Posterior vena cava (tissue), 2 donors: ENCODE measurements at regions of chr13 and their contacts with region 1.

Region 1: DNA sequence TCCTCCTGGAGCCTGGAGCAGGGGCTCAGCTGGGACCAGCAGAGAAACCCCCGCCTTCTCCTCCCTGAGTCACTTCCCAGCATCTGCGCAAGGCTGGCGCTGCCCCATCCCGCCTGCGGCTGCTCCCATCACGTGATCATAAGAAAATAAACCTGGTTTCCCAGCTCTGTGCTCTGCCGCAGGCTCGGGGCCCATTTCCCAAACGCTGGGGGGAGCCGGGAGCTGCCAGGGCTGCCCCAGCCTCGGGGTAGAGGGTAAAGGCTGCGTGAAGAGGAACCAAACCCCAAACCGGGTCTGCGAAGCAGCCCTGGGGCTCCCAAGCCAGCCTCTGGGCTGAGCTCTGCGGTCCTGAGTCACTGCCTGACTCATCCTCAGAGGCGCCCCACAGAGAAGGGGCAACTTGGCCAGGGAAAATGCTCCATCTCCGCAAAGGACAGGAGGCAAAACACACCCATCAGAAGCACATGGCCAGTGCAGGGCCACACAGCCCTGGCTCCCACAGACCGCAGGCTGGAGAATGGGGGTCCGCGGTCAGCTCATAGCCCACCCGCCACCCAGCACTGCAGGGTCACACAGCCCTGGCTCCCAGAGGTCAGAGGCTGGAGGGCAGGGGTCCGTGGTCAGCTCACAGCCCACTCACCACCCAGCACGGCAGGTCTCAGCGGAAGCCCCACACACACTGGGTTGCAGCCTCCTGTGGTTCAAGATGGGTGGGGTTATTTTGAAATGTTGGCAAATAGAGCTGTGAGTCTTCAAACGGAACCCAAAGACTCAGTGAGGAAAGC is 67.1 kb downstream of the RASA3 start:
- DNase-seq: peak; percentile 96

Region 2: GRCh38 chr13:114035583-114036531 is 29.5 kb before region 1 on chr13:
- intact Hi-C with region 1: loop called in 1 of 2 experiments (anchors 2 kb)
- DNase-seq: no peak

Region 3: GRCh38 chr13:114099918-114100445 is 34.6 kb after region 1 on chr13:
- intact Hi-C with region 1: loop called in 1 of 2 experiments (anchors 5 kb)
- DNase-seq: no peak

Region 4: DNA sequence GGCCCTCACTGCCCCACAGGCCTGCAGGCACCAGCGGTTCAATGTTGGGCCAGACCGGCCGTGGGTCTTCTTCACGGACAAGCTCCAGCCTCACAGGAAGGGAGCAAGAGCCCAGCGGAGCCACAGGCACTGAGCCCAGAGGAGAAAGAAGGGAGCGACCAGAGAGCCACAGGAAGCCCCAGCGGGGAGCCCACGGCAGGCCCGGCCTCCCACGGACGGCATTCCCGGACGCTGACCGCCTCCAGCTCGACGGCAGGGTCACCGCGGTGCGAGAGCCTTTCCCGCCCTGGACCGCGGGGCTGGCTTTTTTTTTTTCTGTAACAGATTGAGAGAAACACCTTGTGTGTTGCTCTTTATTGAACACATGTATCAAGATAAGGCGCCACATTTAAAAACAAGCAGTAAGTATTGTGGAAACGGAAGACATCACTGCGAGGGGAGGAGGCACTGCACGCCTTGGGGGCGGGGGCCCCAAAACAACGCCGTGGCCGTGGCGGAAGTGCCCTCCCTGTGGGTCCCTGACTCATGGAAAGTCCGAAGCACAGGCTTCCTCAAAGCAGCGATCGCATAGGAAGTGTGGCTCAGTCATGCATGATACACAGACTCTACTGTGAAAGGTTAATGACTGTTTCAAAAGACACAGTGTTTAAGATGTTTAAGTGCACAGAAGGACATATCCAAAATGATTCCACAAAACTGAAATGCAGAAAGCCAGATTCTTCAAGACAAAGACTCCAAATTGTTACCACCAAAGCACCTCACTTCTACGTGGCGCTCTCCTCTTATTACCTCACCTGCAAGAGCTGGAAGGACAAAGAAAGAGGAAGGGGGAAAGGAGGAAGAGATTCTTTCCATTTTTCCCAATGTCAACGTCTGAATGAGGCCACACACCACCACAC is 63.5 kb after region 1 on chr13:
- intact Hi-C with region 1: loop called in 1 of 2 experiments (anchors 5 kb)
- DNase-seq: peak; percentile 95